HepG2 (cell line): ENCODE measurements at regions of chr18 and their contacts with region 1.

Region 1: GRCh38 chr18:13067124-13067523 is 76.0 kb downstream of the CEP192 start:
- DNase-seq: no peak
- ATAC-seq: no peak
- H3K4me3 ChIP-seq: no peak overlapping the region
- H3K27ac ChIP-seq: no peak overlapping the region
- H3K4me1 ChIP-seq: peaks cover 13% of the 10 kb centered on the region
- H3K27me3 ChIP-seq: no peaks in the 10 kb centered on the region
- CTCF ChIP-seq: no peak
- EP300 ChIP-seq: no peak
- POLR2A ChIP-seq: no peak
- RAD21 ChIP-seq: no peak

Region 2: DNA sequence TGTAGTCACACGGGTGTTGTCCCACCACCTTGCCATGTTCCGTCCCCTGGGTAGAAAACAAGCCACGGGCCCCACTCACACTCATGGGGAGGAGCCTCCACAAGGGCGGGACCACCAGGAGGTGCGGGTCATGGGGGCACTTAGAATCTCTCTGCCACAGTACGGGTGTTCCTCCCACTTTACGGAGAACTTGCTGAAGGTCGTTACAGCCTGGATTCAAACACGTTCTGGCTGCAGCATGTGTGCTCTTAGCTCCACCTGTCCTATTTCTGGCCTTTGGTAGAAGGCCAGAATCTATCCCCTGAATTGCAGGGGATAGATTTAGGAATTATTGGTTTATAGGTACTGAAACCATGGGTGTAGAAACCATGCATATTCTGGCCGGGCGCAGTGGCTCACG is 90.8 kb before region 1 on chr18:
- CTCF ChIA-PET with region 1: no interaction called
- POLR2A ChIA-PET with region 1: no interaction called
- in situ Hi-C with region 1: no loop called
- intact Hi-C with region 1: no loop called
- DNase-seq: no peak
- ATAC-seq: no peak; the same call in 1 of the 3 replicates
- H3K4me3 ChIP-seq: no peak overlapping the region
- H3K27ac ChIP-seq: no peak overlapping the region
- H3K4me1 ChIP-seq: peaks cover 51% of the 10 kb centered on the region
- H3K27me3 ChIP-seq: no peaks in the 10 kb centered on the region
- CTCF ChIP-seq: no peak
- EP300 ChIP-seq: no peak
- POLR2A ChIP-seq: no peak
- RAD21 ChIP-seq: no peak

Region 3: GRCh38 chr18:12990967-12991838 is 75.9 kb before region 1 on chr18 and contains the start of gene CEP192:
- CTCF ChIA-PET with region 1: no interaction called
- POLR2A ChIA-PET with region 1: no interaction called
- in situ Hi-C with region 1: no loop called
- intact Hi-C with region 1: loop called (anchors 10 kb)
- DNase-seq: peak; percentile 96
- ATAC-seq: peak; percentile 93
- H3K4me3 ChIP-seq: peak within 1 kb of the TSS; percentile 87 to 96 (median 91)
- H3K27ac ChIP-seq: peak within 1 kb of the TSS; percentile 86
- H3K4me1 ChIP-seq: peaks cover 49% of the 10 kb centered on the region
- H3K27me3 ChIP-seq: no peaks in the 10 kb centered on the region; a peak in 2 of 5 replicates
- CTCF ChIP-seq: peak; percentile 68
- EP300 ChIP-seq: no peak
- POLR2A ChIP-seq: peak; percentile 85 to 96
- RAD21 ChIP-seq: peak; percentile 59; the same call in 1 of the 2 replicates
- total RNA-seq, gene CEP192: 24.7 and 33.6 TPM in 2 replicates

Region 4: DNA sequence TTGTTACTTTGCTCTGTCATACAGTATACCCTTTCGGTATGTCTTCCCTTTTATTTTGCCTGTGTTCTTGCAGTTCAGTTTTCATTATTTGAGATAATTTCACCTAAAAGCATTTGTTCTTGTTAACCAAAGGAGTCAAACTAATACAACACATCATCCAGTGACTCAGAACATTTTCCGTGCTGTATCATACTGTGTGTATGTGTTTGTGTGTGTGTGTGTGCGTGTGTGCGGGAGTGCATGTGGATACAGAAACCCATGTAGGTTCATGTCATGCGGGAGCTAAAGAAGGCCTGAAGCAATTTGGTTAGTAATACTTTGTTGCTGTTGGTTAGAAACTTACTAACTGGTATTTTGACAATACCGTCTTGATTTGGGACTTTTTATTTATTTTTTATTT is 16.0 kb before region 1 on chr18:
- CTCF ChIA-PET with region 1: no interaction called
- POLR2A ChIA-PET with region 1: no interaction called
- in situ Hi-C with region 1: no loop called
- intact Hi-C with region 1: loop called (anchors 1 kb)
- DNase-seq: no peak
- ATAC-seq: no peak
- H3K4me3 ChIP-seq: no peak overlapping the region
- H3K27ac ChIP-seq: no peak overlapping the region
- H3K4me1 ChIP-seq: no peaks in the 10 kb centered on the region
- H3K27me3 ChIP-seq: no peaks in the 10 kb centered on the region
- CTCF ChIP-seq: no peak
- EP300 ChIP-seq: no peak
- POLR2A ChIP-seq: no peak
- RAD21 ChIP-seq: no peak